H1 (cell line): ENCODE measurements at regions of chr10 and their contacts with region 1.

Region 1: DNA sequence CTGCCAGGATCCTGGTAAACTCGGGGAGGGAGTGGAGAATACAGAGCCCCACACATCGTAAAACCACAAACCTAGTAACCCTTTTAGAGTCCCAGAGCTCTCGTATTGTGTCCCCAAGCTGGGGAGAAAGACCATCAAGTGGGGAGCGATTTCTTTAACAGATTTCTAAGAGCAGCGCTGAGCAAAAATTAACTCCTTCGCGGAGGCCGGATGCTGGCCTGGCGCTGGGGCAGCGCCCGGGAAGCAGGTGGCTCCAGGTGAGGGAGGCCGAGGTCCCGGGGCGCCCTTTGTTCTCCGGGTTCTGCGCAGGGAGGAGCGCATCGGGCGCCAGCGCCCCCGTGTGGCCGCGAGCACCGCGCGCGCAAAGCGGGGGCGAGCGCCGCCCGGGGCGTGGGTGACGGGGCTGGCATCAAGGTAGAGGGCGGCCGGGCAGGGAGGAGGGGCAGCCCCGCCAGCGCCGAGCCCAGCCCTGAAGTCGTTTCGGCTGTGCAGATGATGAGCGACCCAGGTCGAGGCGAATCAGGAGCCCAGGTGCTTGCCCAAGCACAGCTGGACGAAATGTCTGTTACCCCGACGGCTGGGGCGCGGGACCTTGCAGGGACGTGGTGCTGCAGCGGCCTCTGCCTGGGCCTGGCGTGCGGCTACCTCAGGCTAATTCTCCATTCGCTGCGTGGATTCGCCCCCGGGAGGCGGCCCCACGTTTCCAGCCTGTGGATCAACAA is 10.4 kb upstream of the FGFR2 start:
- DNase-seq: peak in 1 of 2 experiments; percentile 90
- H3K4me3 ChIP-seq: peak overlapping the region in 2 of 4 experiments; percentile 29 to 47; a peak in 3 of 8 replicates
- H3K27ac ChIP-seq: no peak overlapping the region
- H3K4me1 ChIP-seq: peaks cover 0 to 6% (median 2%) of the 10 kb centered on the region in 4 experiments; a peak in 2 of 7 replicates
- H3K27me3 ChIP-seq: peaks cover 0 to 8% (median 4%) of the 10 kb centered on the region in 4 experiments; a peak in 3 of 7 replicates
- CTCF ChIP-seq: peak; percentile 81 to 82 (median 81)
- EP300 ChIP-seq: no peak
- POLR2A ChIP-seq: no peak
- RAD21 ChIP-seq: peak; percentile 66 to 84

Region 2: DNA sequence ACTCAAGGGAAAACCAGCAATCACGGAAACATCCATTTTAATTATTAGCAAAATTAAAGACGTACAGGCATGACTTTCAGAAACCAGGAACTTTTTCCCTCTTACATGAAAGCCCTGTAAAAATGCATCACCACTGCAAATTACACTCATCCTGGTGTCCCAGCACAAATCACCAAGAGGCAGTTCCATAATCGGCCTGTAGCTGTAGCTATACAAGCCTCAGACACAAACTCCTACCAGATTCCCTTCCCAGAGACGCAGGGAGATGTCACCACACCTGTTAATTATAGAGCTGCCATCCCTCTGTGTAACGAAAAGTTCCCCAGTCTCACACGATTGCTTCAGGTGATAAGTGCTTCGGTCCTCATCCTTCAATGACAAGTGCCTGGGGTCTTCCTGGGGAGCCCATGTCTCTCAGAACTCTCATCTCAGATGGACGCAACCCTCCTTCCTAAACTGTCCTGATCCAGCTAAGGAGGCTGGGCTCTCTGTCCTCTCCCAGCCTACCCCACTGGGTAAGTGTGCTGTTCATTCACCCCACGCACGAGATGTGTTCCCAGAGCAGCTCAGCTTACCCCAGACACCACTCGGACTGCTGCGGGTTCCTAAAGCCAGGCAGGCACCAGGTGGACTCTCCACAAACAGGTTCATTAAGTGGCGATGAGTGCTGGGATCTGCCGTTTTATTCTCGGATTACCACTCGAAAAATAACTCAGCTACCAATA is 16.3 kb before region 1 on chr10:
- CTCF ChIA-PET with region 1: interaction called, 15 read pairs
- POLR2A ChIA-PET with region 1: interaction called, 8 read pairs
- DNase-seq: no peak
- H3K4me3 ChIP-seq: peak overlapping the region in 2 of 4 experiments; percentile 2 to 4; a peak in 1 of 8 replicates
- H3K27ac ChIP-seq: no peak overlapping the region
- H3K4me1 ChIP-seq: peaks cover 9 to 43% (median 25%) of the 10 kb centered on the region in 4 experiments
- H3K27me3 ChIP-seq: no peaks in the 10 kb centered on the region
- CTCF ChIP-seq: peak in 2 of 3 experiments; percentile 8 to 46; a peak in 2 of 4 replicates
- EP300 ChIP-seq: no peak
- POLR2A ChIP-seq: no peak
- RAD21 ChIP-seq: peak; percentile 12 to 13; a peak in 1 of 4 replicates

Region 3: DNA sequence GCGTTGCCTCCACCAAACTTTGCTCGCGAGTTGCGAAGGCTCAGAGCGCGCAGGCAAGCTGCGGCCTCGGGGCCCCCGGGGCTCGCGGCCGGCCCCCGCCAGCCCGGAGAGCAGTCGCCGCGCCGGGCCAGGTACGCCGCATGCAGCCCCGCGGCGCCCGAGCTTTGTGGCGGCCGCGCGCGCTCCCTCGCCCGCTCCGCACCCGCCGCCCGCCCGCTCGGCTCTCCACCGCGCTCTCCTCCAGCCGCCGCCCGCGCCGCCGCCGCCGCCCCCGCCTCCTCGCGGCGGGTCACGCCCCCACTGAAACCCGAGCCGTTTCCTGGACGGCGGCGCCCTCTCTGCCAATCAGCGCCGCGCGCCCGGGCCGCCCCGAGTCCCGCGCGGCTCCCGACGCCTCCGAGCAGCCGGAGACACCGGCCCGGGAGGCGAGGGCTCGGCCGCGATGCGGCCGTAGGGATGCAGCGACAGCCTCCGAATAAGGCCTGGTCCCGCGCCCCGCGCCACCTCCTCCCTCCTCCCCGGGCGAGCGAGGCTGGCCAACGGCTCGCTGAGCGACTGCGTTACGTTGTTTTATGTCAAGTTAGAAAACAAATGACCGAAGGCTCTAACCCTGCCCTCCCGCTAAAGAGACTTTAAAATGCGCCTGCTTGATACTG is 10.3 kb before region 1 on chr10 and contains the start of gene FGFR2:
- CTCF ChIA-PET with region 1: interaction called, 26 read pairs
- POLR2A ChIA-PET with region 1: interaction called, 8 read pairs
- DNase-seq: peak in 1 of 2 experiments; percentile 90
- H3K4me3 ChIP-seq: peak within 1 kb of the TSS; percentile 95 to 100 (median 97)
- H3K27ac ChIP-seq: peak within 1 kb of the TSS; percentile 92
- H3K4me1 ChIP-seq: peaks cover 14 to 35% (median 19%) of the 10 kb centered on the region in 4 experiments
- H3K27me3 ChIP-seq: peaks cover 0 to 3% (median 0%) of the 10 kb centered on the region in 4 experiments; a peak in 1 of 7 replicates
- CTCF ChIP-seq: no peak
- EP300 ChIP-seq: peak in 1 of 2 experiments; percentile 76; a peak in 1 of 3 replicates
- POLR2A ChIP-seq: peak; percentile 77 to 85
- RAD21 ChIP-seq: no peak; a peak in 1 of 4 replicates
- total RNA-seq, gene FGFR2: 81.2 and 81.6 TPM in 2 replicates

Region 4: DNA sequence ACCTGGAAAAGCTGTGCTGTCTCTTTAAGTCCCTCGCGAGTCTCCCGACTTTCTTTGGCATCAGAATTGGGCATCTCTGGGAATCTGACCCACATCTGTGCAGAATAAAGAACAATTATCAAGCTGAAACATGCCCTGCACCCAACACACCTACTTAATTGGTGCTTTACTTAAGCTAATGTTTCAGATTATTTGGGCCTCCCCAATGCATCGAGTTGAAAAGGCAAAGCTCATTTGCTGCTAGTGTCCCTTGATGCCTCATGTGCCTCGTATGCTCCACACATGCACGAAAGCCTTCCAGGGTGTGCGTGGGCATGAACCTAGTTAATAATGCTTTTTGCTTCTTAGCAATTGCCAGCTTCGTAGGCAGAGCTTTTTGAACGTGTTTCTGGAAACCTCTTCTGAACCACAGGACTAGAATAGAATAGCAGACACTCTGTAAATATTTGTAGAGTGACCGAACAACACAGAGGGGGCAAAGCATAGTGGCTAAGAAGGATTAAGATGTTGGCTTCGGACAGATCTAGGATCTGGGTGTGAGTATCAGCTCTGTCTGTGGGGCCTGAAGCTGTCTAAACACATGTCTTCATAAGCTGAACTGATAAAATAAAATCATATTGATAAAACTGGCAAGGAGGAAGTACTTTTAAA is 16.3 kb after region 1 on chr10:
- CTCF ChIA-PET with region 1: interaction called, 11 read pairs
- POLR2A ChIA-PET with region 1: no interaction called
- DNase-seq: no peak
- H3K4me3 ChIP-seq: no peak overlapping the region
- H3K27ac ChIP-seq: no peak overlapping the region
- H3K4me1 ChIP-seq: no peaks in the 10 kb centered on the region
- H3K27me3 ChIP-seq: no peaks in the 10 kb centered on the region
- CTCF ChIP-seq: no peak
- EP300 ChIP-seq: no peak
- POLR2A ChIP-seq: no peak
- RAD21 ChIP-seq: no peak

Region 5: DNA sequence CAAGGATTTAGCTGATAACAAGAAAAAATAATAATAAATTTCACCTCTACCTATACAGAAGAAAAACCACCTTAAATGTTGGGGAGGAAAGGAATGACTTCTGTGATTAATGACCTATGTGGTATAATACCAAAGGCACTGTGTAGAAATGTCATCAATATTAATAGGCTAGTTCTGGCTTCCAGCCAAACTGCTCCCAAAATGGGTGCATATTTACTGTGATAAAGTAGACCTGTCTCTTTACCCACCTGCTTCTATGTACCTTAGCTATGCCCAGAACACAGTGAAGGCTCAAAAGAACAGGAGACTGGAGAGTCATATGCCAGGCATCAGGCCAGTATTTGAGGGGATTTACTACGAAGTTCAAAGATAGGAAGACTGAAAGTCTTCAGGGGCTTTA is 243.2 kb after region 1 on chr10:
- CTCF ChIA-PET with region 1: no interaction called
- POLR2A ChIA-PET with region 1: no interaction called
- DNase-seq: no peak
- H3K4me3 ChIP-seq: no peak overlapping the region
- H3K27ac ChIP-seq: no peak overlapping the region
- H3K4me1 ChIP-seq: no peaks in the 10 kb centered on the region; a peak in 1 of 7 replicates
- H3K27me3 ChIP-seq: no peaks in the 10 kb centered on the region
- CTCF ChIP-seq: no peak
- EP300 ChIP-seq: no peak
- POLR2A ChIP-seq: no peak
- RAD21 ChIP-seq: no peak